AG04450 (cell line): ENCODE measurements at regions of chr10 and their contacts with region 1.

Region 1: DNA sequence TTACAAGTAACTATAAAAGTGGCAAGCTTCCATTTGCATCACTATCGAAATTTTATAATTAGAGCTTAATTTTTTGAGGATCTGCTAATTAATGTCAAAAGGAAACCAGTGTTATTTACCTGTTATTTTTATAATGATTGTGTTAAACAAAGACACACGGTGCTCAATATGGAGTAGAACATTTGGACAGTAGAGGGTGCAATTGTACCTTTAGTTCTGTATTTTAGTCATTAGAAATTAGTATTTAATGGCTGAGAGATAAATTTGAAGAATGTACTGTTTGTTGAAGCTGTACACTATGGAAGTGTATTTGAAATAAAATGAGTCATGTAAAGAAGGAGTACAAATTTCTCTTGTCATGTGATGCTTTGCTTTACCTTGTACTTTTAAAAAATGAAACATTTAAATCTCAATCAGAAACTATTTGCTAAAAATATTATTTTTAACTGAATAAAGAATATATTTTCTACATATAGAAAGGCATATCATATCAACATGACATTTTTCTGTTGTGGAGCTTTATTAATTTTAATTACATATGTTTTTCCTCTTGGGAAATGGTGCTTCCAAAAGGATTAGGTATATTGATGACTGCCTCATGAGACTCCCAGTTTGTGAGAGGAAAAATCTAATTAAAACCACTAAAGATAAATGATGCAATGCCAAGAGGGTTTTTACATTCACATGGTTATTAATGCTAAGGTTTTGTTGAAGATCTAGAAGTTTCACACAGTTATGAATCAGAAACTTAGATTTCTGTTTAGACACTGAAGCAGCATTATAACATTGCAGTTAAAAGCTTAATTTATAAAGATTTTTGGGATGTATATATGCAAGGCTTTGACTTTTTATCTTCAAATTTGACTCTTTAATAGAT is 10.4 kb upstream of the PRKG1 start:
- DNase-seq: peak; percentile 26
- H3K4me3 ChIP-seq: no peak overlapping the region
- H3K27ac ChIP-seq: no peak overlapping the region
- H3K27me3 ChIP-seq: no peaks in the 10 kb centered on the region
- CTCF ChIP-seq: peak; percentile 65

Region 2: DNA sequence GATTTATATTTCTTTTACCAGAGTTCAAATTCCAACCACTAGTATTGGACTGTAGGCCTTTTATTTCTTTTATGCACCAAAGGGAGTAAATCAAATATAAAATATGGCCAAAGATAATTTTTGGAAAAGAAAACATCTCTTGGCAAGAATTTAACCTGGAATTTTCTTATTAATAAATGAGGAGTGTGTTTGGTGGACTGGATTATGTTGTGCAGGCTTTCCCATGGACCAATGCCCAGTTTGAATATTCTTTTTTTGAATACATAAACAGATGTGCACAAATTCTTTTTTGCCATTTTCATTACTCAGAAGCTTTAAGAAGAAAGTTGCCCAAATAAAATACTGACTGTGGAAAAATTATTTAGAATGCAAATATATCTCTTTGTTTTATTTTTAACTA is 11.7 kb before region 1 on chr10:
- CTCF ChIA-PET with region 1: interaction called, 14 read pairs
- POLR2A ChIA-PET with region 1: no interaction called
- DNase-seq: no peak
- H3K4me3 ChIP-seq: no peak overlapping the region
- H3K27ac ChIP-seq: no peak overlapping the region
- H3K27me3 ChIP-seq: no peaks in the 10 kb centered on the region
- CTCF ChIP-seq: no peak

Region 3: GRCh38 chr10:51422311-51423120 is 358.6 kb after region 1 on chr10:
- CTCF ChIA-PET with region 1: interaction called, 66 read pairs
- POLR2A ChIA-PET with region 1: no interaction called
- DNase-seq: peak; percentile 32
- H3K4me3 ChIP-seq: no peak overlapping the region
- H3K27ac ChIP-seq: no peak overlapping the region
- H3K27me3 ChIP-seq: no peaks in the 10 kb centered on the region
- CTCF ChIP-seq: peak; percentile 80

Region 4: DNA sequence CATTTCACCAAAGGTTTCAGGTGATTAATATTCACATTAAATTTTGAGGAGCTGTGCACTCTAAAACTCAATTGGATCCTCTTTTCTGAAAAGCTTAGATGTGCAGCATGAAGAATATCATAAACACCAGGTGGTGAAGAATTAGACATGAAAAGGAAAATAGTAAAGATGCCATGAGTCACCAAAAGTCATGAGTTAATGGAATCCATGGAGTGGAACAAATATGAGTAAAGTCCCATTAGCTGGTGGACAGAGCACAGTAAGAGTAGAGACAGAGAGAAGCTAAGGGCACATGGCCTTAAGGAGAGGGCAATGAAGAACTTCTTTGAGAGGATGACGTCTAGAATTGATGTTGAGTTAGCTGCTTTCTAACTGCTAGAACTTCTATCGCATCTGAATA is 363.9 kb after region 1 on chr10:
- CTCF ChIA-PET with region 1: interaction called, 66 read pairs
- POLR2A ChIA-PET with region 1: no interaction called
- DNase-seq: no peak
- H3K4me3 ChIP-seq: no peak overlapping the region
- H3K27ac ChIP-seq: no peak overlapping the region
- H3K27me3 ChIP-seq: no peaks in the 10 kb centered on the region
- CTCF ChIP-seq: no peak

Region 5: GRCh38 chr10:51960494-51960895 is 896.6 kb after region 1 on chr10:
- CTCF ChIA-PET with region 1: interaction called, 11 read pairs
- POLR2A ChIA-PET with region 1: no interaction called
- DNase-seq: peak; percentile 33
- H3K4me3 ChIP-seq: no peak overlapping the region
- H3K27ac ChIP-seq: no peak overlapping the region
- H3K27me3 ChIP-seq: no peaks in the 10 kb centered on the region
- CTCF ChIP-seq: peak; percentile 59

Region 6: GRCh38 chr10:52004342-52004949 is 940.5 kb after region 1 on chr10:
- CTCF ChIA-PET with region 1: interaction called, 15 read pairs
- POLR2A ChIA-PET with region 1: no interaction called
- DNase-seq: peak; percentile 27
- H3K4me3 ChIP-seq: no peak overlapping the region
- H3K27ac ChIP-seq: no peak overlapping the region
- H3K27me3 ChIP-seq: no peaks in the 10 kb centered on the region
- CTCF ChIP-seq: peak; percentile 78